Caco-2 (cell line): ENCODE measurements at regions of chr7 and their contacts with region 1.

Region 1: DNA sequence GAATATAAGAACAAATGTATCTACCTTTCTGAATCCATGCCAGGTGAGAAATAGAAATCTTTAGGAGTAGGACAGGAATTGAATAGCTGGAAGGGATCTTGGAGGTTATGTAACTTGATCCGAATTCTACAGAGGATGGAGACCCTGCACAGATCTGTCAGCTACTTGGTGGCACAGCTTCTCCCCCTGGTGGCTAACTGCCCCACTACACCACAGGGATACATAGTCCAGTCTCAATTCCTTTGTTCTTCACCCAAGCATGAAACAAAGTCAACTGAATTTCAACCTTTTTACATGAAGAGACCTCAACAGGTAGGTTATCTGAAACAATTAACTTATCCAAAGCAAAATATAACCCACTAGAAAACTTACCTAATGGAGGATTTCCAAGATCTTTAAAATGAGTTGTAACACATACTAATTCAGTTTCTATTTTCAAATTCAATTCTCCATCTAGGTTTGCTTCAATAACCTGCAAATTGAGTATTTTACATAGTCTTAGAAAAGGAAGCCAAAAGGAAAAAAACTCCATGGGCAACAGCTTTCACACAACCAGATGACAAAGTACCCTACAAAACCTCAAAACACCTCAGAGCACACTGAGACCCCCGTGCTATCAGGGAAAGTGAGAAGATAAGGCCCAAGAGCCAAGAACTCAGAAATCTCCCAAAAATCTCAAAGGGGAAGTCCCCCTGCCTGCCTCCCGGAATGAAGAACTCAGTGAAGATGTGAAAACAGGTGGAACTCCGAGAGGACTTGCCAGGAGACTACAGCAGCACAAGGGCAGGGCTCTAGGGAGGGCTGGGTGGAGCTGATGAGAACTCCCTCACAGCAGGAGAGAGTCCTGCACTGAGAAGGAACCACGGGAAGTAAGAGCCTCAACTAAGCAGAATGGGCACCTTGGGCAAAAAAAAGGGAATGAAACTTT is 10.3 kb downstream of the HUS1 start:
- DNase-seq: peak; percentile 76 to 85
- H3K4me3 ChIP-seq: no peak overlapping the region
- H3K4me3 Mint-ChIP-seq: no peak overlapping the region
- H3K27ac Mint-ChIP-seq: no peak overlapping the region
- H3K4me1 ChIP-seq: no peaks in the 10 kb centered on the region
- H3K4me1 Mint-ChIP-seq: peaks cover 6% of the 10 kb centered on the region
- H3K27me3 ChIP-seq: no peaks in the 10 kb centered on the region
- H3K27me3 Mint-ChIP-seq: no peaks in the 10 kb centered on the region
- CTCF ChIP-seq: peak; percentile 95 to 96

Region 2: GRCh38 chr7:47383072-47383471 is 586.0 kb before region 1 on chr7:
- CTCF ChIA-PET with region 1: no interaction called
- POLR2A ChIA-PET with region 1: no interaction called
- intact Hi-C with region 1: no loop called
- DNase-seq: no peak
- H3K4me3 ChIP-seq: no peak overlapping the region
- H3K4me3 Mint-ChIP-seq: no peak overlapping the region
- H3K27ac Mint-ChIP-seq: no peak overlapping the region
- H3K4me1 ChIP-seq: peaks cover 59% of the 10 kb centered on the region
- H3K4me1 Mint-ChIP-seq: peaks cover 55% of the 10 kb centered on the region
- H3K27me3 ChIP-seq: no peaks in the 10 kb centered on the region
- H3K27me3 Mint-ChIP-seq: no peaks in the 10 kb centered on the region
- CTCF ChIP-seq: no peak

Region 3: GRCh38 chr7:47852330-47853245 is 116.5 kb before region 1 on chr7:
- CTCF ChIA-PET with region 1: no interaction called
- POLR2A ChIA-PET with region 1: no interaction called
- intact Hi-C with region 1: loop called (anchors 1 kb)
- DNase-seq: peak in 1 of 2 experiments; percentile 25
- H3K4me3 ChIP-seq: no peak overlapping the region
- H3K4me3 Mint-ChIP-seq: no peak overlapping the region
- H3K27ac Mint-ChIP-seq: no peak overlapping the region
- H3K4me1 ChIP-seq: no peaks in the 10 kb centered on the region
- H3K4me1 Mint-ChIP-seq: no peaks in the 10 kb centered on the region
- H3K27me3 ChIP-seq: no peaks in the 10 kb centered on the region
- H3K27me3 Mint-ChIP-seq: peaks cover 2% of the 10 kb centered on the region
- CTCF ChIP-seq: peak in 1 of 2 experiments; percentile 24

Region 4: GRCh38 chr7:47945261-47946001 is 23.7 kb before region 1 on chr7:
- CTCF ChIA-PET with region 1: interaction called, 67 read pairs
- POLR2A ChIA-PET with region 1: interaction called, 5 read pairs
- intact Hi-C with region 1: loop called (anchors 1 kb)
- DNase-seq: peak; percentile 67 to 78
- H3K4me3 ChIP-seq: no peak overlapping the region
- H3K4me3 Mint-ChIP-seq: no peak overlapping the region
- H3K27ac Mint-ChIP-seq: no peak overlapping the region
- H3K4me1 ChIP-seq: peaks cover 15% of the 10 kb centered on the region
- H3K4me1 Mint-ChIP-seq: peaks cover 30% of the 10 kb centered on the region
- H3K27me3 ChIP-seq: no peaks in the 10 kb centered on the region
- H3K27me3 Mint-ChIP-seq: no peaks in the 10 kb centered on the region
- CTCF ChIP-seq: peak; percentile 74 to 77

Region 5: DNA sequence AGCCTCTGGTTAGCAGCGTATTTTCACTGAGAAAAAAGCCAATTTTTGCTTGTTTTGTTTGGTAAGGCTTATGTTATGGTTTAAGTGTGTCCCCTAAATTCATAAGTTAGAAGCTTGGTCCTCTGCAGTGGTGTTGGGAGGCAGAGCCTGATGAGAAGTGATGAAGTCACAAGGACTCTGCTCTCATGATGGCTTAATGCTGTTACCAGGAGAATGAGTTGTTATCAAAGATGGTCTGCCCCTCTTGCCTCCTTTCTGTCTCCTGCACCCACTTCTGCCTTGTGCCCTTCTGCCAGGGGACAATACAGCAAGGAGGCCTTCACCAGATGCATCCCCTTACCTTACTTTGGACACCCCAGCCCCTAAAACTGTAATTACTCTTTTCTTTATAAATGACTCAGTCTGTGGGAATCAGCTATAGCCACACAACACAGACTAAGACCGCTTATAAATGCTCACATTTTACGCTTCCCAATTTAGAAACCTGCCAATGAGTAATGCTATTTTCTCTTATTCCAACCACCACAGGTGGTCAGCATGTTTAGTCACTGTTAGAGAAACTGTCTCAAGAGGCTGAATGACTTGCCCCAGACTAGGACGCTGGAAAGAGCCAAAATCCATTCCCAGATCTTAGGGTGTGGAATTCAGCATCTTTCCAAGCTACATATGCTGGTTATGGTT is 14.7 kb before region 1 on chr7:
- CTCF ChIA-PET with region 1: interaction called, 9 read pairs
- POLR2A ChIA-PET with region 1: no interaction called
- intact Hi-C with region 1: loop called (anchors 1 kb)
- DNase-seq: no peak
- H3K4me3 ChIP-seq: no peak overlapping the region
- H3K4me3 Mint-ChIP-seq: no peak overlapping the region
- H3K27ac Mint-ChIP-seq: no peak overlapping the region
- H3K4me1 ChIP-seq: peaks cover 20% of the 10 kb centered on the region
- H3K4me1 Mint-ChIP-seq: peaks cover 26% of the 10 kb centered on the region
- H3K27me3 ChIP-seq: no peaks in the 10 kb centered on the region
- H3K27me3 Mint-ChIP-seq: no peaks in the 10 kb centered on the region
- CTCF ChIP-seq: no peak

Region 6: DNA sequence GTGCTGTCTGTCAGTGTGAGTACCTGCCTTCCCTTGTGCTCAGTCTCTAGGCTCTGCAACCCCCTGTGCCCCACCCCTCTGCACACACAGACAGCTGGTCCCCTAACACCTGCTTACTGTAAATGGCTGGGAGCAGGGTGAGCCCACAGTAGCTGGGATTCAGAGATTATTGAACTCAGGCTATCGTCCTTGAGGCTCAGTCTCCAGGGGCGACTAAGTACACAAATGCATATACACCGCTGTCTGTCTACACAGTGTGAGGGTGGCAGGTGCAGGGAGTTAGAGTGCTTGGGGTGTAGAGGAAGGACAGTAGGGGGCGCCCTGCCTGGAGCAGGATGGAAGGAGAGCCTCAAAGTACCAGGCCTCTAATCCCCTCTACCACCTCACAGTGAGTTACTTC is 132.9 kb after region 1 on chr7:
- CTCF ChIA-PET with region 1: no interaction called
- POLR2A ChIA-PET with region 1: no interaction called
- intact Hi-C with region 1: no loop called
- DNase-seq: no peak
- H3K4me3 ChIP-seq: no peak overlapping the region
- H3K4me3 Mint-ChIP-seq: no peak overlapping the region
- H3K27ac Mint-ChIP-seq: no peak overlapping the region
- H3K4me1 ChIP-seq: no peaks in the 10 kb centered on the region
- H3K4me1 Mint-ChIP-seq: no peaks in the 10 kb centered on the region
- H3K27me3 ChIP-seq: no peaks in the 10 kb centered on the region
- H3K27me3 Mint-ChIP-seq: no peaks in the 10 kb centered on the region
- CTCF ChIP-seq: peak in 1 of 2 experiments; percentile 22

Region 7: DNA sequence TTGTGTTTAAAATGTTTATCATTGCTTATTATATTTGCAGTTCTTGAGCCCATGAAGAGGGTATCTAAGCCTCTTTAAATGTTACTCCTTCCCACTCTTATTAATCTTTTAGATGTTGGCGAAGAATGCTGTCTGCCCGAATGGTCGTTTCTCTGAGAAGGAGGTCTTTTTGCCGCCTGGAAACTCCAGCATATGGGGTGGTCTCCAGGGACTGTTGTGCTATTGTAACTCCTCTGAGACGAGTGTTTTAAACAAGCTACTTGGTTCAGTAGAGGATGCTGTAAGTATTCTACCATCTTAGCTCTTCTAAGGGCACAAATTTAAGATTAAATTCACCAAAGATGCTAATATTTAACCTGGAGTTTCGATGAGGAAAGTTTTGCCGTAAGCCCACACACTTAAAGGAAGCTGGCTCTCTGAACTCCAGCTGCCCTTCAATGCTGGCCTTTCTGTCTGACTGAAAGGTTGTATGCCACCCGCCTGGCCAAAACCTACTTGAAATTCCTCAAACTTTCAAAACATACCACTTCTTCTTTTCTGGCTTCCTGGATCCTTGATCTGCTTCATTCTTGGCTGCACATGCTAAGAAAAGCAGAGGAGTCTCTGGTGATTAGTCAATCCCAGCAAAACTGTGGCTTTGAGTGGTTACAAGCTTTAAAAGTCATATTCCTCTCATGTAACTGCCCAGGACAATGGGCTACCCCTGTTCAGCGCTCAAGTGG is 276.8 kb after region 1 on chr7:
- CTCF ChIA-PET with region 1: no interaction called
- POLR2A ChIA-PET with region 1: no interaction called
- intact Hi-C with region 1: no loop called
- DNase-seq: no peak
- H3K4me3 ChIP-seq: no peak overlapping the region
- H3K4me3 Mint-ChIP-seq: no peak overlapping the region
- H3K27ac Mint-ChIP-seq: no peak overlapping the region
- H3K4me1 ChIP-seq: no peaks in the 10 kb centered on the region
- H3K4me1 Mint-ChIP-seq: no peaks in the 10 kb centered on the region
- H3K27me3 ChIP-seq: peaks cover 1% of the 10 kb centered on the region; the same call in 1 of the 2 replicates
- H3K27me3 Mint-ChIP-seq: peaks cover 20% of the 10 kb centered on the region
- CTCF ChIP-seq: no peak

Region 8: DNA sequence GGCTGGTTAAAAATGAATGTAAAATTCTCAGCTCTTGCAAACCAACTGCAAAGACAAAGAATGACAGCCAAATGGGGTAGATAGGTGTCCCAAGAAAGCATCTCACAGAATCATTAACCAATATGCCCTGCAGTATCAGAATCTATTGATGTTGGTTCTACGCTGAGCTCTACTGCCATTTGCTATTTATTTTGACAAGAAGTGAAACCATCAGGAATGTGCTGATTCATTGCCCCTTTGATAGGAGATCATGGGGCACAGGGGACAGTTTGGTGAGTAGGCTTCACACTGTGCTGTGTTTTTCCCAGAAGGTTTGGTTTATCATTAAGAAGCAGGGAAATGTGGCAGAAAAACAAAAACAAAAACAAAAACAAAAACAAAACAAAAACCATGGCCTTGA is 935.9 kb after region 1 on chr7:
- CTCF ChIA-PET with region 1: no interaction called
- POLR2A ChIA-PET with region 1: no interaction called
- intact Hi-C with region 1: no loop called
- DNase-seq: no peak
- H3K4me3 ChIP-seq: no peak overlapping the region
- H3K4me3 Mint-ChIP-seq: no peak overlapping the region
- H3K27ac Mint-ChIP-seq: no peak overlapping the region
- H3K4me1 ChIP-seq: 0 out of 2 replicates have a peak, but pooled peaks cover 5% of the 10 kb centered on the region
- H3K4me1 Mint-ChIP-seq: peaks cover 6% of the 10 kb centered on the region
- H3K27me3 ChIP-seq: no peaks in the 10 kb centered on the region
- H3K27me3 Mint-ChIP-seq: no peaks in the 10 kb centered on the region
- CTCF ChIP-seq: no peak